Heart left ventricle (tissue), 16 donors: ENCODE measurements at regions of chr3 and their contacts with region 1.

Region 1: DNA sequence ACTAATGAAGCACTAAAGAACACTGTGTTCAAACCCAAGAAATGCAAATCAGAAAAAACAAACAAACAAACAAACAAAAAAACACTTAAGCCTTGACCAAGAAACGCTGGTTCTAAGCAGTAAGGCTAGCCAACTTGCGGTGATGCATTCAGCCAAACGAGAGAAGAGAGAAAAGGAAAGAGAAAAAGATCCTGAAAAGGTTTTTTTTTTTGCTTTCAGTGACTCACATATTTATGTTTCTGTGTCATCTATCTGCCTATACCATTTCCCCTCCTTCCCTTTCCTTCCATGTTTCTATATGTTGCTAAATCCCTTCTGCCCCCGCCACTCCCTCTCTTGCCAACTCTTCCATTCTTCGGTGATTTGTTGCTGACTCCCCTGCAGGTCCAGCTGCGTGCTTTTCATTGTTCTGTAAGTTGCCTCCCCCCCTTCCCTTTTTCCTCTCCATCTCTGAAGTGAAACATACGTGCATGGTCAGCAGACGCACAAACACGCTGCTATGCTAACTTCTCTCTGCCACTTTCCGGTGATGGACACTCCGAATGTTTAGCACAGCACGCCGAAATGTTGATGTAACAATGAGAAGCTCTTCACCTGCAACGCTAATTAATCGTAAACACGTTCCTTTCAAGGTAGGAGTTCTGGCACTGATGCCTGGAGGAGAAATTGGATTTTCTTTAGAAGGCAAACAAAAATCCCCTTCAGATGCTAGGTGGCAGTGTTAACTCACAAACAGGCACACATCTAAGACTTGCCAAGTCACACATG is 154.4 kb downstream of the TUSC7 start:
- DNase-seq: no peak
- ATAC-seq: no peak
- H3K4me3 ChIP-seq: peak overlapping the region in 1 of 12 donors; percentile 23
- H3K27ac ChIP-seq: no peak overlapping the region
- H3K4me1 ChIP-seq: no peaks in the 10 kb centered on the region
- H3K27me3 ChIP-seq: peaks cover 0 to 31% (median 0%) of the 10 kb centered on the region in 9 donors
- CTCF ChIP-seq: peak in 9 of 12 donors; percentile 18 to 44 (median 30)
- POLR2A ChIP-seq: no peak

Region 2: DNA sequence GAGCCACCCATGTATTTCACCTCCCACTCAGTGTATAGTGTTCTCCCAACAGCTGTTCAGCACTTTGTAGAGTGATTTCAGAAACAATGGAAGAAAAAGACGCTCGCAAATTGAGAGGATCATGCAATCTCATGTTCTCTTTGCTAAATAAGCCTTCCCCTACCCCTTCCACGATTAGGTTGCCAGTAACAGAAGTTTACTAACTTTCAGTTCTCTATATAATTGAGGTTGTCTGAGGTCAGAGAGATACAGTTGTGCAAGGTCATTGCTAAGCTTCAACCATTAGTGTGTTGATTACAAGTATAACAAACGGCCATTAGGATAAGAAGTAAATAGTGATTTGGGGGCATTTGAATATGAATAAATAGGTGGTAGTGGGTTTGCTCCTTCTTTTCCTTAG is 54.8 kb before region 1 on chr3:
- intact Hi-C with region 1: no loop called
- DNase-seq: no peak
- ATAC-seq: peak in 1 of 4 donors; percentile 42
- H3K4me3 ChIP-seq: no peak overlapping the region
- H3K27ac ChIP-seq: peak overlapping the region in 1 of 12 donors; percentile 38
- H3K4me1 ChIP-seq: peaks cover 0 to 3% (median 0%) of the 10 kb centered on the region in 12 donors
- H3K27me3 ChIP-seq: no peaks in the 10 kb centered on the region
- CTCF ChIP-seq: no peak
- POLR2A ChIP-seq: no peak

Region 3: GRCh38 chr3:117719316-117719926 is 855.4 kb after region 1 on chr3:
- intact Hi-C with region 1: loop called in 1 of 10 experiments (anchors 10 kb)
- DNase-seq: no peak
- ATAC-seq: no peak
- H3K4me3 ChIP-seq: no peak overlapping the region
- H3K27ac ChIP-seq: no peak overlapping the region
- H3K4me1 ChIP-seq: no peaks in the 10 kb centered on the region
- H3K27me3 ChIP-seq: peaks cover 0 to 5% (median 0%) of the 10 kb centered on the region in 9 donors
- CTCF ChIP-seq: peak; percentile 39 to 74 (median 64)
- POLR2A ChIP-seq: no peak